ENCODE measurements at regions of chr2 and their contacts with region 1.

Region 1: DNA sequence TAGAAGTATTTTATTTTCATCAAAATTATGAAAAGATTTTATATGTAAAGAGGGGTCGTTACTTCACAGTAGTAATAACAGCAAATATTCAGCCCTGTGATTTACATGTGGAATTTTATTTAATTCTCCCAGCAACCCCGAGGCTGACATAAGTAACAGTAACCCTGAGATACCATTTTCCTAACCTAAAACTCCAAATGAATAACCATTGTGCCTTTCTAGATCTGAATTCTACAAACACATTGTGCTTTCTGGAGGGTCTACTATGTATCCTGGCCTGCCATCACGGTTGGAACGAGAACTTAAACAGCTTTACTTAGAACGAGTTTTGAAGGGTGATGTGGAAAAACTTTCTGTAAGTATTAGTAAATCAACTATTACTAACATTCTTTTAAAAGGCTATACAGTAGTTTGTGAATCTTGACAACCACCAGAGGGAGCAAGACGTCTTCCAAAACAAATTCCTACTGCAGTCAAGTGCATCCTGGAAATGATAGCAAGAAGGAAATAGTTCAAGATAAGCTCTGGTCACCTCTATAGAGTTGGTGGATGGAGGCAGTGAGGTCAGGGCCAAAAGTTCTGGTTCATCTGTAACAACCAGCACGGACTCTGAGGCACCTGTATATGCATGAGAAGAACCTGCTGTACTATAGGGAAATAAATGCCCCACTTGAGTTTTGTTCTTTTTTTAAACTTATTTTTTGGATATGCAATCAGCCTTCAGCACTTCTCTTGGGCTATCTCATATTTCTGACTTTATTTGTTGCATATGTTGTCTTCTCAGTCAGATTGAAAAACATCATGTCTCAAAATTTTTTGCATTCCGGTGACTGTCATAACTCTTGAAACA is 37.4 kb downstream of the ACTR2 start:
- H3K4me3 ChIP-seq: no peak overlapping the region
- H3K27ac ChIP-seq: no peak overlapping the region
- H3K4me1 ChIP-seq: peaks cover 7% of the 10 kb centered on the region; the same call in 1 of the 2 replicates
- CTCF ChIP-seq: 0 out of 2 replicates have a peak, but pooled peaks have one; percentile 20

Region 2: DNA sequence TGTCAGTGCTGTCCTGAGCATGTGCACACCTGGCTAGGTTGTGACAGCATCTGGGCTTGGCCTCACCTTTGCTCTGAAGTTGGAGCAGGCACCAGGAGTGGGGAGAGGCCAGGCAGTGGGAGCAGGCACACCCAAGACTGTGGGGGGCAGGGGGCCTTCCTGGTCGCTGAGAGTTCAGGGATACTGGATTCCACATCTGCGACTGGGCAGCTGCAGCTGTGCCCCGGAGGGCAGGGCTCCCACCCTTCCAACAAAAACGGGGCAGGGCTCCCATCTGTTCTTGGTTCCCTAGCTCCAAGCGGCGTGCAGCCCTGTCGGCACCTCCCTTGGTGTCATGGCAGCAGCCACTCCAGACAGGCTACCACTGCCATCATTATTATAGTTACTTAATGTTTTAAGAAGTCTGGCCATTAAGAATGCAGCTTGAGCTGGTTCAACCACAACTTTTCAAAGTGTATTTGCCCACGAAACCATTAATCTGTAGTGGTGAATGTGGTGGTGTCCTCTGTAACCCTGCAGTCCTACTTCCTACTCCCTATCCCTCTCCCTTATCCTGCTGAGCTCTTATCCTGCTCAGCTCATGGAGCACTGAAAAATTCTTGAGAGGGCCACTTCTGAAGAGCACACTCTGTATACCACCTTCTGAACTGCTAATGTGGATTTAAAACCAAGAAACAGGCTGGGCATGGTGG is 87.1 kb before region 1 on chr2:
- CTCF ChIA-PET with region 1: no interaction called
- POLR2A ChIA-PET with region 1: no interaction called
- H3K4me3 ChIP-seq: no peak overlapping the region
- H3K27ac ChIP-seq: no peak overlapping the region
- H3K4me1 ChIP-seq: no peaks in the 10 kb centered on the region
- CTCF ChIP-seq: no peak

Region 3: GRCh38 chr2:65553504-65554074 is 288.5 kb after region 1 on chr2:
- CTCF ChIA-PET with region 1: interaction called, 21 read pairs
- POLR2A ChIA-PET with region 1: no interaction called
- H3K4me3 ChIP-seq: no peak overlapping the region
- H3K27ac ChIP-seq: no peak overlapping the region
- H3K4me1 ChIP-seq: no peaks in the 10 kb centered on the region
- CTCF ChIP-seq: no peak

Region 4: DNA sequence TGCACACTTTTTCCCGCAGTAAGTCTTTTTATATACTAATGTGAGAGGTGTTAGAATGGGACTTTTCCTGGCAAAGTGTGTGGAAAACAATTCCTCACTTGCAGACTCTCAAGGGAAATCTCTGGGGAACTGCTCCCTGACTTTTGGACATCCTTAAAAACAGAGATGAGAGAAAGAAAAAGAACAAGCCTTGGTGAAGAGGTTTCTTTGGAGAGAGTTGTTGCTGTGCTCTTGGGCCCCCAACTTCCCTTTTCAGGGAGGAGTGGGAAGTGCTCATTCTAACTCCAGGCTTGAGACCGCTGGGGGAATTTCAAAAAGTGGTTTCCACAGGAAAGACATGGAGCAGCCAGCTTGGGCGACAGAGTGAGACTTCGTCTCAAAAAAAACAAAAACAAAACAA is 309.9 kb after region 1 on chr2:
- CTCF ChIA-PET with region 1: interaction called, 10 read pairs
- POLR2A ChIA-PET with region 1: no interaction called
- H3K4me3 ChIP-seq: no peak overlapping the region
- H3K27ac ChIP-seq: no peak overlapping the region
- H3K4me1 ChIP-seq: no peaks in the 10 kb centered on the region
- CTCF ChIP-seq: no peak

Measured in HEK293 (cell line).